ENCODE measurements at regions of chr11 and their contacts with region 1.

Region 1: DNA sequence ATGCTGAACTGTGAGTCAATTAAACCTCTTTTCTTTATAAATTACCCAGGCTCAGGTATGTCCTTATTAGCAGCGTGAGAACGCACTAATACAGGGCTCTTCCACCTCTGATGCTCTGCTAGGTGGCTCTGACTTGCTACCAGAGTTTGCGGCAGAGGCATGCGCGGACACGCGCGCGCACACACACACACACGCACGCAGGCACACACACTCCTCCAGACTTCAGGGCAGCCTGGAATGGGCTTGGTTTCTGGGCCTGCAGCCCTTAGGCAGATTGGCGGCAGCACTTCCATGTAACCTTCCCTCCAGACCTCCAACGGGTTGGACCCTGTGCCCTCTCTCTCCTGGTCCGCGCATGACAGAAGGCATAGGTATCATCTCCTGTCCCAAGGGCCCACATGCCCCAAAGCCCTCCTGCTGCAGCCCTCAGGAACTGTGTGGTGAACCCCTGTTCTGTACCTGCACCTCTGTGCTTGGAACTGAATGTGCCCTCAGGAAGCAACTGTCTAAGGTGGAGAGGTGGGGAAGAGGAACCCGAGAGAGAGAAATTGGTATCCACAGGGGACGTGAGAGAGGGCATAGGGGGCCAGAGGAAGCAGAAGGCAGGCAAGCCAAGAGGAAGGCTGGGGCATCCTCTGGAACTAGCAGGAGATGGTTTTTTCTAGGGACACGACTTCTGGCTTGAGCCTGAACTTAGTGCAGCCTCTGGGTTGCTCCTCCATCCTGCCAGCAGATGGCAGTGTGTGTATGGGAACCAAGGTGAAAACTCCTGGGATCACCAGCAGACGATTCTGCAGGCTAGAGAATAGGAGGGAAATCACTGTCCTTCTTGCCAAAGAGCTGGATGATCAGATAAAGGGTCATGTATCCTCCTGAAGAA is 23.4 kb upstream of the RIC3 start:
- DNase-seq: peak; percentile 83
- CTCF ChIP-seq: peak; percentile 91

Region 2: GRCh38 chr11:8126649-8127289 is 65.5 kb before region 1 on chr11:
- CTCF ChIA-PET with region 1: no interaction called
- POLR2A ChIA-PET with region 1: no interaction called
- DNase-seq: no peak
- CTCF ChIP-seq: no peak

Region 3: GRCh38 chr11:8209208-8209807 is 17.1 kb after region 1 on chr11:
- CTCF ChIA-PET with region 1: interaction called, 125 read pairs
- POLR2A ChIA-PET with region 1: no interaction called
- DNase-seq: peak; percentile 60
- CTCF ChIP-seq: peak; percentile 44

Region 4: DNA sequence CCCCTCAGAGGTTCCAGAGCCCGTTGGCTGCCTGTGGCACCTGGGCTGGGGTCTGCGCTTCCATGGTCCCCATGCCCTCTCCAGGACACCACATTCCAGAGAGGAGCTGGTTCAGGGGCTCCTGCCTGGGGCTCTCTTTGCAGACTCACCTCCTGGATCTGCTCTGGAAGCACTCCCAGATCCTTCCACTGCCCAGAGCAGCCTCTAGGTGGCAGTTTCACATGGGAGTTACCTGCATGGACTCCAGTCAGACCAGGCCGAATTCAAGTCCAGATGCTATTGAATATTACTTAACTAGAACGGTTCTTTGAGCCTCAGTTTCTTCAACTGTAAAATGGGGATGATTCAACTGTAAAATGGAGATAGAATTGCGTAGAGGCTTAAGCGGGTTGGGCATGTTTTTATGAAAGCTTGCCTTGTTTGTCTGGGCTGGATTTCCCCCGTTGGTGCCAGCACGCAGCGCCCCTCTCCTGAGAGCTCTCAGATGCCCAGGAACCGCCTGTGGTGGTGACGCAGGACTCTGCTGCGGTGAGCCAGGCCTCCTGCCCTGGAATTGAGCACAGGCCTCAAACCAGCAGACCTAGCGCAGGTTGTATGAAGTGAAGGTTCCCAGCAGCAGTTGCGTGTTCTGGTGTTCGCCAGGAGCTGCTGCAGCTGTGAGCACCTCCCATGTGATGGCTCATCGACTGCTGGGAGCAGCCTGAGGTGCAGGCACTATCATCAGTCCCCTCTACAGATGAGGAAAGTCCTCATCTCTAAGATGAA is 27.2 kb after region 1 on chr11:
- CTCF ChIA-PET with region 1: interaction called, 125 read pairs
- POLR2A ChIA-PET with region 1: no interaction called
- DNase-seq: peak; percentile 62
- CTCF ChIP-seq: peak; percentile 70